ENCODE measurements at regions of chr6 and their contacts with region 1.

Region 1: GRCh38 chr6:170306324-170307079 is at the start of gene FAM120B:
- DNase-seq: peak; percentile 95 to 96 (median 95)
- H3K4me3 ChIP-seq: peak within 1 kb of the TSS; percentile 85 to 99
- H3K4me3 Mint-ChIP-seq: peak within 1 kb of the TSS; percentile 91 to 99 (median 94)
- H3K27ac ChIP-seq: peak within 1 kb of the TSS; percentile 84
- H3K27ac Mint-ChIP-seq: peak within 1 kb of the TSS; percentile 93 to 98 (median 97)
- H3K4me1 ChIP-seq: peaks cover 53% of the 10 kb centered on the region
- H3K4me1 Mint-ChIP-seq: peaks cover 34 to 43% (median 41%) of the 10 kb centered on the region in 4 donors
- H3K27me3 ChIP-seq: no peaks in the 10 kb centered on the region
- H3K27me3 Mint-ChIP-seq: peaks cover 8 to 14% of the 10 kb centered on the region in 2 donors
- total RNA-seq, gene FAM120B: 46.8 to 48.6 TPM

Region 2: GRCh38 chr6:169212897-169213813 is 1093.3 kb before region 1 on chr6:
- CTCF ChIA-PET with region 1: no interaction called
- POLR2A ChIA-PET with region 1: no interaction called
- intact Hi-C with region 1: loop called (anchors 5 kb)
- DNase-seq: peak; percentile 82 to 94 (median 93)
- H3K4me3 ChIP-seq: peak overlapping the region in 1 of 2 donors; percentile 36
- H3K4me3 Mint-ChIP-seq: peak overlapping the region; percentile 44 to 84 (median 70)
- H3K27ac ChIP-seq: peak overlapping the region; percentile 32
- H3K27ac Mint-ChIP-seq: peak overlapping the region in 6 of 7 donors; percentile 65 to 95 (median 86)
- H3K4me1 ChIP-seq: peaks cover 10% of the 10 kb centered on the region
- H3K4me1 Mint-ChIP-seq: peaks cover 6 to 12% (median 8%) of the 10 kb centered on the region in 4 donors
- H3K27me3 ChIP-seq: no peaks in the 10 kb centered on the region
- H3K27me3 Mint-ChIP-seq: no peaks in the 10 kb centered on the region

Region 3: GRCh38 chr6:169751242-169752073 is 555.0 kb before region 1 on chr6 and contains the starts of genes DYNLT2 and ERMARD:
- CTCF ChIA-PET with region 1: no interaction called
- POLR2A ChIA-PET with region 1: interaction called, 8 read pairs
- intact Hi-C with region 1: loop called (anchors 2 kb)
- DNase-seq: peak; percentile 93 to 96 (median 94)
- H3K4me3 ChIP-seq: peak within 1 kb of the TSS; percentile 80 to 90
- H3K4me3 Mint-ChIP-seq: peak within 1 kb of the TSS; percentile 97 to 100 (median 99)
- H3K27ac ChIP-seq: peak within 1 kb of the TSS; percentile 93
- H3K27ac Mint-ChIP-seq: peak within 1 kb of the TSS; percentile 99 to 100 (median 100)
- H3K4me1 ChIP-seq: peaks cover 24% of the 10 kb centered on the region
- H3K4me1 Mint-ChIP-seq: peaks cover 18 to 39% (median 31%) of the 10 kb centered on the region in 4 donors
- H3K27me3 ChIP-seq: no peaks in the 10 kb centered on the region
- H3K27me3 Mint-ChIP-seq: peaks cover 0 to 1% of the 10 kb centered on the region in 2 donors
- total RNA-seq, gene DYNLT2: 4.6 to 6.9 TPM
- total RNA-seq, gene ERMARD: 33.4 to 41.4 TPM

Region 4: DNA sequence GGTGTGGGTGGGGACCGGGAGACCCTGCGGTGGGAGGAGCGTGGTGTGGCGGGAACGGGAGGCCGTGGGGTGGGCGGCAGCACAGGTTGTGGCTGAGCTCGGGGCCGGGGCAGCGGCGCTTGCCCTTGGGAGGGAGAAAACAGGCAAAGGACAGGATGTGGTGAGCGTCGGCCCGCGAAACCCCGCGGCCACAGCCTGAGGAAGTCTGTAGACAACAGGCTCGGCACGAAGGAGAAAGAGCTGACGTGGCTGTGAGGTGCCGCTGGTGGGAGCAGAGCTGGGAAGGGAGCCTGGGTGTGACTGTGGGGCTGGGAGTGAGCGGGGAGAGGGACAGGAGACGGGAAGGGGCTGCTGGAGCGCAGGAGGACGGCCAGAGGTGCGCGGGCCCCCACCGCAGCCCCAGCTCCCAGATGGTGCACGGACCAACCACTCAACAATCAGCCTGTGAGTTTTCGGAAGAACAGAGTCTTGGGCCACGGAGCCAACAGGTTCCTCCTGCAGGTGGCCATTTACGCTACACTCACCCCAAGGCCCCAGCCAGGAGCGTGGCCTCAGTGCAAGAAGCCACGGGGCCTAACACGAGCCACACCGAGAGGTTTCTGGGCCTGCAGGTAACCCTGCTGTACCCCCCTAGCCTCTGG is 218.4 kb before region 1 on chr6:
- CTCF ChIA-PET with region 1: no interaction called
- POLR2A ChIA-PET with region 1: interaction called, 8 read pairs
- intact Hi-C with region 1: loop called (anchors 5 kb)
- DNase-seq: peak; percentile 46 to 71 (median 48)
- H3K4me3 ChIP-seq: peak overlapping the region; percentile 57 to 61
- H3K4me3 Mint-ChIP-seq: peak overlapping the region; percentile 83 to 96 (median 91)
- H3K27ac ChIP-seq: peak overlapping the region; percentile 40
- H3K27ac Mint-ChIP-seq: peak overlapping the region; percentile 78 to 98 (median 92)
- H3K4me1 ChIP-seq: peaks cover 25% of the 10 kb centered on the region
- H3K4me1 Mint-ChIP-seq: peaks cover 21 to 47% (median 32%) of the 10 kb centered on the region in 4 donors
- H3K27me3 ChIP-seq: no peaks in the 10 kb centered on the region
- H3K27me3 Mint-ChIP-seq: no peaks in the 10 kb centered on the region

Region 5: DNA sequence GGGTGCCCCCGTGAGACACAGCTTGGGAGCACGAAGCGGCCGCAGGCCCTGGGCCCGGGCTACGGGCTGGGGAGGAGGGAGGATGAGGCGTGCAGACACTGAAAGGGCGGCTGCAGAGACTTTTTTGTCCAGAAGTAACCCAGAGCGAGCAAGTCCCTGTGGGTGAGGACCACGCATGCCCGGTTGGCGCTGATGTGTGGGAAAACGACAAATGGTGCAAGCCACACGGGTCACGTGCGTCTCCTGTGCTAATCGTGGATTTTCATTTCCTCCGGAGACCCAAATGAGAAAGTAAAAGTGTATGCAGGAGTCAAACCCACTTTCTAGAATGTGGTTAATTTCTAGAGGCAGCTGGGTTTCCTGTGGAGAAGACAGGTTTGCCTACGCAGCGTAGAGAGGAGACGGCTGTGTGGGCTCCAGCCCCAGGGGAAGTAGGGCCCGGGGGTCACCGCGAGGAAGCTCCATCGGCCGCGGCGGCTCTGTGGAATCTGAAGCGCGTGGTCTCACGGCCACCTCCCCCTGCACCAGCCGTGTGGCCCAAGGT is 34.7 kb before region 1 on chr6:
- CTCF ChIA-PET with region 1: no interaction called
- POLR2A ChIA-PET with region 1: interaction called, 14 read pairs
- intact Hi-C with region 1: loop called (anchors 5 kb)
- DNase-seq: peak; percentile 77 to 87 (median 80)
- H3K4me3 ChIP-seq: peak overlapping the region; percentile 51 to 61
- H3K4me3 Mint-ChIP-seq: peak overlapping the region; percentile 82 to 96 (median 90)
- H3K27ac ChIP-seq: no peak overlapping the region
- H3K27ac Mint-ChIP-seq: peak overlapping the region; percentile 64 to 93 (median 82)
- H3K4me1 ChIP-seq: peaks cover 22% of the 10 kb centered on the region
- H3K4me1 Mint-ChIP-seq: peaks cover 11 to 29% (median 18%) of the 10 kb centered on the region in 4 donors
- H3K27me3 ChIP-seq: no peaks in the 10 kb centered on the region
- H3K27me3 Mint-ChIP-seq: peaks cover 2 to 5% of the 10 kb centered on the region in 2 donors

Region 6: GRCh38 chr6:170554013-170554795 is 247.7 kb after region 1 on chr6 and contains the start of gene TBP:
- CTCF ChIA-PET with region 1: no interaction called
- POLR2A ChIA-PET with region 1: interaction called, 7 read pairs
- intact Hi-C with region 1: loop called (anchors 1 kb)
- DNase-seq: peak; percentile 96 to 99 (median 97)
- H3K4me3 ChIP-seq: peak within 1 kb of the TSS; percentile 63 to 85
- H3K4me3 Mint-ChIP-seq: no peak within 1 kb of the TSS
- H3K27ac ChIP-seq: peak within 1 kb of the TSS; percentile 94
- H3K27ac Mint-ChIP-seq: no peak within 1 kb of the TSS
- H3K4me1 ChIP-seq: peaks cover 53% of the 10 kb centered on the region
- H3K4me1 Mint-ChIP-seq: peaks cover 10 to 37% (median 22%) of the 10 kb centered on the region in 4 donors
- H3K27me3 ChIP-seq: no peaks in the 10 kb centered on the region
- H3K27me3 Mint-ChIP-seq: no peaks in the 10 kb centered on the region
- total RNA-seq, gene TBP: 27.2 to 27.5 TPM